ENCODE measurements at regions of chr9 and their contacts with region 1.

Region 1: GRCh38 chr9:127611899-127612790 is at the start of gene STXBP1:
- DNase-seq: peak; percentile 98
- H3K4me3 Mint-ChIP-seq: peak within 1 kb of the TSS; percentile 85
- H3K27ac Mint-ChIP-seq: peak within 1 kb of the TSS; percentile 76
- H3K4me1 Mint-ChIP-seq: peaks cover 27% of the 10 kb centered on the region
- H3K27me3 Mint-ChIP-seq: peaks cover 46% of the 10 kb centered on the region
- total RNA-seq, gene STXBP1: 26.5 and 31.1 TPM in 2 replicates

Region 2: GRCh38 chr9:127568971-127569885 is 42.9 kb before region 1 on chr9:
- intact Hi-C with region 1: loop called (anchors 2 kb)
- DNase-seq: peak; percentile 94
- H3K4me3 Mint-ChIP-seq: peak overlapping the region; percentile 89
- H3K27ac Mint-ChIP-seq: peak overlapping the region; percentile 91
- H3K4me1 Mint-ChIP-seq: peaks cover 41% of the 10 kb centered on the region
- H3K27me3 Mint-ChIP-seq: no peaks in the 10 kb centered on the region

Region 3: GRCh38 chr9:127629468-127630081 is 17.4 kb after region 1 on chr9:
- intact Hi-C with region 1: no loop called
- DNase-seq: no peak
- H3K4me3 Mint-ChIP-seq: no peak overlapping the region
- H3K27ac Mint-ChIP-seq: no peak overlapping the region
- H3K4me1 Mint-ChIP-seq: peaks cover 19% of the 10 kb centered on the region
- H3K27me3 Mint-ChIP-seq: peaks cover 2% of the 10 kb centered on the region

Region 4: DNA sequence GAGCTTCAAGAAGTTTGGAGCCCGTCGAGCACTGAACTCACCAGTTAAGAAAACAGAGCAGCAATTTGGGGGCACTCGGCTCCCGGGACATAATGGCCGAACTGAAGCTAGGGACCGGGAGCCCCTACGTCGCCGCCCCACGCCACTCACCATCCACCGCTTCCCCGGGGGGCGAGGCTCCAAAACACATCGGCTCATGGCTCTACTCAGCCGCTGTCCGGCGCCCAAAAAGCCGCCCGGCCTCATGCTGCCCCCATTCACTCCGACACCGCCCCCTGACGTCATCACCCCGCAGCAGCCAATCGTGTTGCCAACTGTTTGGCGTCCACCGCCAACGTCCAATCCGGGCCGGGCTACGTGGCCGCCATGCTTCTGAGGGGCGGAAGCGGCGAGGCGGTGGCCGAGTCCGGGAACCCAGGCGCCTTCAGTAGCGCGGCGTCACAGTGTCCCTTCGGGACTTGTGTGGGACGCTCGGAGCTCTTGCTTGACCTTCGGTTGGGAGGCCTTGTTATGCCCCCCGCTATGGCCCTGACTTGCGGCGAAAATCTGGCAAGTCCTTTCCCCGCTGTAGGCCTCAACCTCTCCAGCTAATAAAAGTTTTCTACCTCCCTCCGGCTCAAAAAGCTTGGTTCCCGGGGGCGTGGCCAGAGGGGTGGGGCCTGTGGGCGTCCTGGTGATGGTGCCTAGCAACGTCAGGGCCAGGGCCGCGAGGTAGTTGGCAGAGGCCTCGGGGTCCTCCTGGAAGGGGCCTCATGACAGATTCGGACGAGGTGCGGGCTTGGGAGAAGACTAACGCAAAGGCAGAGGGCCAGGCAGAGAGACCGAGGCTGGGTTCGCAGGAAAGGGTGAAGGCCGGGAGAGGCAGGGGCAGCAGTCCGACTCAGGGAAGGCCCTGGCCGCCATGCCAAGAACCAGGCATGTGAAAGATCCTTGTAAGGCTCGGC is 103.5 kb after region 1 on chr9 and contains the starts of genes PTRH1 and TTC16:
- intact Hi-C with region 1: loop called (anchors 5 kb)
- DNase-seq: peak; percentile 100
- H3K4me3 Mint-ChIP-seq: peak within 1 kb of the TSS; percentile 100
- H3K27ac Mint-ChIP-seq: peak within 1 kb of the TSS; percentile 99
- H3K4me1 Mint-ChIP-seq: peaks cover 27% of the 10 kb centered on the region
- H3K27me3 Mint-ChIP-seq: peaks cover 2% of the 10 kb centered on the region
- total RNA-seq, gene PTRH1: 22.8 TPM in 2 replicates
- total RNA-seq, gene TTC16: not detected in 2 replicates

Region 5: DNA sequence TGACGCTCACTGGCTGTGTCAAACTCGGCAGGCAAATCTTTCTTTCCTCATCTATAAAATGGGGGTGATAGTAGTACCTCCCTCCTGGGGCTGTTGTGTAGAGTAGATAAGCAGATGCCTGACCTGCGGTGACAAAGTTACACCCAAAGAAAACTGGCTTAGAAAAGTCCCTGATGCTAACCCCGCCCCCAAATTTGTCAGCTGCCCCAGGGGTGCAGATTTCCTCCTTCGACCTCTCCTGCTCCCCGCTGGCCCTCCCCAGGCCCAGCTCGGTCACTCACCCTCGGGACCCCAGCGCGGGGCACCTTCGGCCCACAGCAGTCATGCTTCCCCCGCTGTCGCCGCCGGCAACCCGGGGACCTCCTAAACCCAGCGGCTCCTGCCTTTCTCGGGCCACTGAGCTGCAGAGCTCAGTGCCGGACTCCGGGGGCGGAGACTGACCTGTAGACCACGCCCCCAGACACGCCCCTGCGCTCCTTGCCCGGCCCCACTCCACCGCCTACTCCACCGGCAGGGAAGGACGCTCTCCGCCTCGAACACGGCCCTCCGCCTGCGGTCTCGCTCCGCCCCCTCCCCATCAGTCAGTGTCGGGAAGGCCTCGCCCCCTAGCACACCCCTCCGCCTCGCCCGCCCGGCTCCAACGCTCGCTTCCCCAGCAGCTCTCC is 158.9 kb after region 1 on chr9:
- intact Hi-C with region 1: loop called (anchors 5 kb)
- DNase-seq: peak; percentile 99
- H3K4me3 Mint-ChIP-seq: peak overlapping the region; percentile 93
- H3K27ac Mint-ChIP-seq: peak overlapping the region; percentile 94
- H3K4me1 Mint-ChIP-seq: peaks cover 58% of the 10 kb centered on the region
- H3K27me3 Mint-ChIP-seq: no peaks in the 10 kb centered on the region

Region 6: DNA sequence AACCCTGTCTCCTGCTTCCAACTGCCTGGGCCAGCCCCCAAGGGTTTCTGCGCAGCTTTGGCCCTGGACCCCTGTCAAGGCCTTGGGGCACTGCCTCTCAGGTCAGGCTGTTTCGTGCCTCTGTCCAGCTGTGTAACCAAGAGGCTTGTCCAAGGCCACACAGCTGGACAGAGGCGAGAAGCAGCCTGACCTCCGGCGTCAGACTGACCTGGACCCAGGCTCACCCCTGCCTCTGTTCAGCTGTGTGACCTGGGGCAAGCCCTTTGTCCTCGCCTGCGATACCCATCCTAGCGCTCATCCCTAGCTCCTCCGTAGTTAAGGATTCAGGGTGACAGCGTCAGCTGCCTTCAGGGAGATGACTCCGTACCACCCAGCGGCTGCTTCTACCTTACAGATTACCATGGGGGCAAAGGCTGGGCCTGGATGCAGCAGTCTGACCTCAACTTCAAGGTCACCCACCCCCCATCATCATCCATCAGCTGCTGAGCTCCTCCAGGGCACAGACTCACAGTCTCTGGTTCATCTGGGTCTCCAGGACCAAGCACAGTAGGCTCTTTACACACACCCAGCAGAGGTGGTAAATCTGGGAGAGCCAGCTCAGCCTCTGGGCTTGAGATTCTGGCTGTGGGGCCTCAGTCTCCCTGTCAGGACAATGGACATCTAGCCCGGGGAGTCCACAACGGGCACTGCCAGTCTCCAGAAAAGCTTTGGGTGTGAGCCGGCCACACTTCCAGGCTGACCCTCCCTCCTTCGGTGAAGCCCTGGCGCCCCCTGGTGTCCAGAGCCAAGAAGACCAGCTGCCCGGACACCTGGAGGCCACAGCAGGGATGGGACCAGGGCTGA is 257.4 kb after region 1 on chr9:
- intact Hi-C with region 1: loop called (anchors 10 kb)
- DNase-seq: peak; percentile 95
- H3K4me3 Mint-ChIP-seq: no peak overlapping the region
- H3K27ac Mint-ChIP-seq: no peak overlapping the region
- H3K4me1 Mint-ChIP-seq: peaks cover 11% of the 10 kb centered on the region
- H3K27me3 Mint-ChIP-seq: no peaks in the 10 kb centered on the region